Prostate gland (tissue), 2 donors: ENCODE measurements at regions of chr1 and their contacts with region 1.

Region 1: DNA sequence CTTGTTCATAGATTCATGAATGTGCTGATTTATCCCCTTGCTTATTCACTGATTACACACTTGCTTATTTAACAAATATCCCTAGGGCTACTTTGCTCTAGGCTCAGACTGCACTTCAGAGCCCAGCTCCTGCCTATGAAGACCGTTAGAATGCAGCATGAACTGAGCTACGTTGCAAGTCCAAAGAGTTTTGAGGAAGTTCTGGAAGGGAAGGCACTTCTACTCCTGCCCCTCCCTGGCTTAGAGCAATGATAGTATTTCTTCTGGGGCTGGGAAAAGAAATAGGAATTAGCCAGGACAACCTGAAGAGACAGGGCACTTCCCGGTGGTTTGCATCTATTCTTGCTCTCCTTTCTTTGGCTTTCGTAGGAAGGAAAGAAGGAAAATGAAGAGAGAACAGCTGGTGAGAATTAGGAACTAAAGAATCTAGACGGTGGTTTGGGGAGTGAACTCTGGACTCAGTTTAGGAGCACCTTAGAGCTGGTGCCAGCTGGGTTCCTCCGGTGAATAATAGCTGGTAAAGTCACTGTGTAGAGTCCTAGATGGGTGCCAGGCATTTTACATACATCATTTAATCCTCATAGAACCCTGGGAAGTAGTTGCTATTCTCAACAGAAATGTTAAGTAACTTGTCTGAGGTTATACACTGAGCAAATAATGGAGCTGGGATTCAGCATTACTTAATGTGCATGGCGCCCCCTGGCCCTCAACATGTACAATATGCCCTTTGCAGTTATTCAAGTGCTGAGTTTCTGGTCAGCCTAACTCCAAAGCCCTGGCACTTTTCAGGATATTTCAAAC is 65.9 kb downstream of the NDUFS5 start:
- DNase-seq: peak; percentile 77
- H3K4me3 ChIP-seq: no peak overlapping the region
- H3K27ac ChIP-seq: no peak overlapping the region
- H3K4me1 ChIP-seq: no peaks in the 10 kb centered on the region
- H3K27me3 ChIP-seq: no peaks in the 10 kb centered on the region
- CTCF ChIP-seq: peak in 3 of 4 experiments; percentile 53 to 69 (median 69)
- POLR2A ChIP-seq: no peak

Region 2: GRCh38 chr1:39026051-39026865 is 65.8 kb before region 1 on chr1 and contains the start of gene NDUFS5:
- intact Hi-C with region 1: loop called (anchors 5 kb)
- DNase-seq: peak; percentile 86
- H3K4me3 ChIP-seq: peak within 1 kb of the TSS; percentile 53 to 68
- H3K27ac ChIP-seq: peak within 1 kb of the TSS; percentile 89 to 94
- H3K4me1 ChIP-seq: no peaks in the 10 kb centered on the region
- H3K27me3 ChIP-seq: no peaks in the 10 kb centered on the region
- CTCF ChIP-seq: no peak
- POLR2A ChIP-seq: peak; percentile 75
- total RNA-seq, gene NDUFS5: 310 to 473 TPM